ENCODE measurements at regions of chr12 and their contacts with region 1.

Region 1: DNA sequence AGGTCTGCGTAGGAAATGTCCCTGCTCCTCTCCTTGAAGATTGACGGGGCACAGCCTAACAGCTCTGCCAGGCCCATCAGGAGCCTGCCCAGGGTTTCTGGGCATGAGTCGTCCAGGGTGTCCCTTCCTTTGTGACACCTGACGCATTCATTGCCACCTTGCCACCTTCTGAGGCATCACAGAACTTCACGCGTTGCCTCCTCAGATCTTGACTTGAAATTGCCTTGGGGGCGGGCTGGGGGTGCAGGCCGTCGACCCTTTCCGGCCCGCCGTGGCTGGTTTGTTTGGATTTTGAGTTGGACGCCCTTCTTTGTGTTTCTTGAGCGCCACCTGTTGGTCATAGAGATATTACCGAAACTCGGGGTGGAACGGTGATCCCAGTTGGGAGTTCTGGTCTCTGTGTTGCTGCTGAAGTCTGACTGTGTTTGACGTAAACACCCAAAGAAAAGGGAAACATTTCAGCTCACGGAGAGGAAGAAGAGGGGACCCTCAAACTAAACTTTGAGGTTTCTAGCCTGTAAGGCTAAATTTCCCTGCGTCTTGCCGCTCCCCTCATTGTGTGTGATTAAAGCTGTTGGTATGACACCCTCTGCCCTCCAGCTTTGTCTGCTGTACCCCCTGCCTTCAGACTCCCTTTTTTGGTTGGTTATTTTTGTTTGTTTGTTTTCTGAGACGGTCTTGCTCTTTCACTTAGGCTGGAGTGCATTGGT is 44.6 kb downstream of the MLXIP start:
- DNase-seq: peak; percentile 86
- ATAC-seq: peak; percentile 51
- H3K4me3 Mint-ChIP-seq: peak overlapping the region; percentile 28; the same call in 1 of the 2 replicates
- H3K27ac Mint-ChIP-seq: peak overlapping the region; percentile 76
- H3K4me1 Mint-ChIP-seq: peaks cover 23% of the 10 kb centered on the region
- H3K27me3 Mint-ChIP-seq: no peaks in the 10 kb centered on the region
- CTCF ChIP-seq: peak; percentile 79

Region 2: GRCh38 chr12:121637231-121637914 is 485.8 kb before region 1 on chr12:
- CTCF ChIA-PET with region 1: no interaction called
- POLR2A ChIA-PET with region 1: no interaction called
- DNase-seq: no peak
- ATAC-seq: peak; percentile 16; the same call in 1 of the 2 replicates
- H3K4me3 Mint-ChIP-seq: no peak overlapping the region
- H3K27ac Mint-ChIP-seq: peak overlapping the region; percentile 60; the same call in 1 of the 2 replicates
- H3K4me1 Mint-ChIP-seq: peaks cover 29% of the 10 kb centered on the region
- H3K27me3 Mint-ChIP-seq: no peaks in the 10 kb centered on the region
- CTCF ChIP-seq: no peak

Region 3: DNA sequence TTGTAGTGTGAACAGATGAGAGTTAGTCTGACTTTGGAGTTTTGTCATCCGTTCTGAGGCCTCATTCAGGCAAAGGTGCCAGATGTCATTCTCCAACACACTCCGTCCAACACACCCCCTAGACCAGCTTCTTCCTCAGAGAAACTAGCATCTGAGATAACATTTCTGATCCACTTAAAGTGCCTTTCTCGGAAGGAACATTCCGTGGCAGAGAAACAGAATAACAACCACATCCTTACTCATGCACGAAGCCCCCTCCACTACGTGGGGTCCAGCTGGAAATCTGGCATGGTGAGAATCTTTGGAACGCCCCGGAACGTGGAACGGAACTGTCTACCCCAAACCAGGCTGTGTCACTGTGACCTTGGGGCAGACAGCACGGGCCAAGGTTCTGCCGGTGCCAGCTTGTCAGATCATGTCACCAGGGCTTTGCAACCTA is 118.6 kb before region 1 on chr12:
- CTCF ChIA-PET with region 1: no interaction called
- POLR2A ChIA-PET with region 1: no interaction called
- DNase-seq: no peak
- ATAC-seq: no peak
- H3K4me3 Mint-ChIP-seq: no peak overlapping the region
- H3K27ac Mint-ChIP-seq: no peak overlapping the region
- H3K4me1 Mint-ChIP-seq: peaks cover 6% of the 10 kb centered on the region
- H3K27me3 Mint-ChIP-seq: no peaks in the 10 kb centered on the region; the same call in 1 of the 2 replicates
- CTCF ChIP-seq: no peak

Region 4: GRCh38 chr12:122064025-122064777 is 59.0 kb before region 1 on chr12:
- CTCF ChIA-PET with region 1: interaction called, 13 read pairs
- POLR2A ChIA-PET with region 1: no interaction called
- DNase-seq: peak; percentile 94
- ATAC-seq: peak; percentile 96
- H3K4me3 Mint-ChIP-seq: peak overlapping the region; percentile 73
- H3K27ac Mint-ChIP-seq: peak overlapping the region; percentile 95
- H3K4me1 Mint-ChIP-seq: peaks cover 35% of the 10 kb centered on the region
- H3K27me3 Mint-ChIP-seq: no peaks in the 10 kb centered on the region
- CTCF ChIP-seq: no peak

Region 5: DNA sequence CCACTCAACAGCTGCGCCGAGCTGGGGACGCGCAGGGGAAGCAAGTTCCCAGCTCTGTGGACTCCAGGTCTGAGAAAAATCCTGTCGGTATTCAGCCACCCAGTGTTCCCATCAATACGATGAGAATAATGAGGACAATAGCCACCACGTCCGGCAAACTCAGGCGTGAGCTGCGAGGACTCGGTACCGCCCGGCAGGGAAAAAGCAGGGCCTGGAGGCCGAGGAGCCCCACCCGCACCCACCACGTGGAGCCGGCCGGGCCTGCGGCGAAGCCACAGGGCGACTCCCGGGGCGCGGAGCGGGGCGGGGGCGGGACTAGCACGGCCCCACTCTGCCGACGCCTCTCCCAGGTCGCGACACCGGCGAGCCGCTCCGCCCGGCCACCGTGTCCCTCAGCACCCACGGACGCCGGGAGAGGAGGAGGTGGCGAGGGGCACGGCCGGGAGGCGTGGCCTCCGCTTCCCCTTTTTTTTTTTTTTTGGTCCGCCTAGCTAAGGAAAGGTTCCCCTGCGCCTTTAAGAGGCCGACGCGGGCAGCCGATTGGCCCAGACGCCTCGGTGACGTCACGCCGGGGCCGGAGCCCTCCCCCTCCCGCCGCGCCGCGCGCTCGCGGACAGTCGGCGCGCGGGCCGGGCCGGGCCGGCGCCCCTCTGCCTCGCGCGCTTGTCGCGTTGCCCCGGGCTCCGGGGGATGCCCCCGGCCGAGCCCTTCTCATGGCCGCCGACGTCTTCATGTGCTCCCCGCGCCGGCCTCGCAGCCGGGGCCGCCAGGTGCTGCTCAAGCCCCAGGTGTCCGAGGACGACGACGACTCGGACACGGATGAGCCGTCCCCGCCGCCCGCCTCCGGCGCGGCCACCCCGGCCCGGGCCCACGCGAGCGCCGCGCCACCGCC is 44.8 kb before region 1 on chr12 and contains the start of gene MLXIP:
- CTCF ChIA-PET with region 1: interaction called, 14 read pairs
- POLR2A ChIA-PET with region 1: interaction called, 4 read pairs
- DNase-seq: peak; percentile 91
- ATAC-seq: peak; percentile 74
- H3K4me3 Mint-ChIP-seq: peak within 1 kb of the TSS; percentile 87
- H3K27ac Mint-ChIP-seq: no peak within 1 kb of the TSS
- H3K4me1 Mint-ChIP-seq: peaks cover 31% of the 10 kb centered on the region
- H3K27me3 Mint-ChIP-seq: peaks cover 8% of the 10 kb centered on the region
- CTCF ChIP-seq: no peak
- total RNA-seq, gene MLXIP: 40.5 to 49.4 TPM (median 44.4 TPM) in 3 replicates

Region 6: GRCh38 chr12:122097927-122098756 is 25.1 kb before region 1 on chr12:
- CTCF ChIA-PET with region 1: interaction called, 18 read pairs
- POLR2A ChIA-PET with region 1: no interaction called
- DNase-seq: no peak
- ATAC-seq: peak; percentile 68
- H3K4me3 Mint-ChIP-seq: no peak overlapping the region
- H3K27ac Mint-ChIP-seq: peak overlapping the region; percentile 93
- H3K4me1 Mint-ChIP-seq: peaks cover 37% of the 10 kb centered on the region
- H3K27me3 Mint-ChIP-seq: no peaks in the 10 kb centered on the region
- CTCF ChIP-seq: no peak

Region 7: DNA sequence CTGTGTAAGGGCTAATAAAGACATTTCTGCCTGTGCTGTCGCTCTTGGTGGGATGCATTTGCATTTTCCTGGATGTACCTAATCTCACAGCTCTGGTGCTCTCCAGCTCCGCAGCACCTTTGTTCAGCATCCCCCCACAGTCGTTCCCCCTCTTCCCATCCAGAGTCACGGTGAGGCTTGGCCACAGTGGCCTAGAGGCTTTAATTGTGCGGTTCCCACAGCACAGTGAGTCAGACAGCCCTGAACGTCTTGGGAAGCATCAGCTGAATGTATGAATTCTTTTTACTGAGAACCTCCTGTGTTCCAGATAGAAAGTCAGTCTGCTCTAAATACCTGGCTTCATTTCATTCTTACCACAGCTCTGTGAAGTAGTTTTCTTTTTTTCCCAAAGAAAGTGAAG is 15.9 kb before region 1 on chr12:
- CTCF ChIA-PET with region 1: interaction called, 19 read pairs
- POLR2A ChIA-PET with region 1: no interaction called
- DNase-seq: no peak
- ATAC-seq: no peak
- H3K4me3 Mint-ChIP-seq: no peak overlapping the region
- H3K27ac Mint-ChIP-seq: 0 out of 2 replicates have a peak overlapping the region, but pooled peaks have one; percentile 57
- H3K4me1 Mint-ChIP-seq: peaks cover 6% of the 10 kb centered on the region
- H3K27me3 Mint-ChIP-seq: no peaks in the 10 kb centered on the region
- CTCF ChIP-seq: no peak

Region 8: GRCh38 chr12:122166422-122167349 is 43.5 kb after region 1 on chr12:
- CTCF ChIA-PET with region 1: no interaction called
- POLR2A ChIA-PET with region 1: no interaction called
- DNase-seq: no peak
- ATAC-seq: no peak
- H3K4me3 Mint-ChIP-seq: no peak overlapping the region
- H3K27ac Mint-ChIP-seq: no peak overlapping the region; the same call in 1 of the 2 replicates
- H3K4me1 Mint-ChIP-seq: 0 out of 2 replicates have a peak, but pooled peaks cover 2% of the 10 kb centered on the region
- H3K27me3 Mint-ChIP-seq: no peaks in the 10 kb centered on the region
- CTCF ChIP-seq: no peak

Measured in WTC11 (cell line).